Activated T-helper 1 cell treated with anti-CD3 and anti-CD28 coated beads, Interleukin-12 subunit alpha, Interleukin-12 subunit beta, Interleukin-2, Interleukin-4 antibody, amounts not matched to agents 30 ng/mL and 10 ng/mL and 1 ng/mL, durations not matched to agents 14 hours and 24 hours and 36 hours (primary cell): ENCODE measurements at regions of chr2 and their contacts with region 1.

Region 1: GRCh38 chr2:169095621-169096105 is 26.3 kb downstream of the DHRS9 start:
- DNase-seq: no peak
- H3K4me3 Mint-ChIP-seq: peak overlapping the region; percentile 4
- H3K27ac Mint-ChIP-seq: no peak overlapping the region
- H3K4me1 Mint-ChIP-seq: peaks cover 16% of the 10 kb centered on the region
- H3K27me3 Mint-ChIP-seq: peaks cover 7% of the 10 kb centered on the region

Region 2: DNA sequence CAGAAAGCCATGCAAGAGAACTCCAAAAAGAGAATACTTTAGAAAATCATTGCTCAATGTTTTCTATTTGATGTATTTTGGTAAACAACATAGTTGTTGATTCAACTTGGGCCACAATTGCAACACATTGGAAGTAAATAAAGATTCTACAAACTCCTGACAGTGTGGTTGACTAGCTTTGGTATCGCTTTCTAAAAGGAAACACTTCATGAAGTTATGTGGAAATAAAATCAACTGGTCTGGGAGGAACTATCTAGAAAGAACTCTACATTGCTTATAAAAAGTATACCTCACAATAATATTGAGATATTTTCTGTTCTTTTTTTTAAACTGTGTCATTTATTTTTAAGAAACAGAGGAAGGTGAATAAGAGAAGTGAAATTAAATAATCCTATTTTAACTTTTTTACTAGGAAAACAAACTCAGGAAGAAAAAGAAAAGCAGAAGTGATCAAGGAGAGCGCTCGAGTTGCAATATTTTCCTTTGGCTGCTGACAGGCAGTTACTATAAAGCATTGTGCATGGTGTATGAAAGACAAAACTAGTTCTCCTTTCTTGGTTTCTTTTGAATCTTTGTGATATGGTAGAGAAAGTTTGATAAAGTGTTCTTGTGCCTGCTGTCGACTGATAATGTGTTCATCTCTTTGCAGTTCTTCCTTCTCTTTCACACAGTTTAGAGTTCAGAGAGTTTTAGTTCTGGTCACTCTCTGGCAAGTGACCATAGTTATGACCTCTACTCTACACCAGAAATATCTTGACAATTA is 23.3 kb before region 1 on chr2:
- intact Hi-C with region 1: loop called (anchors 2 kb)
- DNase-seq: no peak
- H3K4me3 Mint-ChIP-seq: peak overlapping the region; percentile 29
- H3K27ac Mint-ChIP-seq: peak overlapping the region; percentile 54
- H3K4me1 Mint-ChIP-seq: peaks cover 44% of the 10 kb centered on the region
- H3K27me3 Mint-ChIP-seq: no peaks in the 10 kb centered on the region